ENCODE measurements at regions of chr3 and their contacts with region 1.

Region 1: GRCh38 chr3:195583831-195584542 is at the start of gene APOD:
- DNase-seq: no peak
- H3K4me3 Mint-ChIP-seq: no peak within 1 kb of the TSS
- H3K27ac Mint-ChIP-seq: no peak within 1 kb of the TSS
- H3K4me1 Mint-ChIP-seq: peaks cover 21% of the 10 kb centered on the region
- H3K27me3 Mint-ChIP-seq: peaks cover 3% of the 10 kb centered on the region
- total RNA-seq, gene APOD: 3.4 and 4.0 TPM in 2 replicates

Region 2: DNA sequence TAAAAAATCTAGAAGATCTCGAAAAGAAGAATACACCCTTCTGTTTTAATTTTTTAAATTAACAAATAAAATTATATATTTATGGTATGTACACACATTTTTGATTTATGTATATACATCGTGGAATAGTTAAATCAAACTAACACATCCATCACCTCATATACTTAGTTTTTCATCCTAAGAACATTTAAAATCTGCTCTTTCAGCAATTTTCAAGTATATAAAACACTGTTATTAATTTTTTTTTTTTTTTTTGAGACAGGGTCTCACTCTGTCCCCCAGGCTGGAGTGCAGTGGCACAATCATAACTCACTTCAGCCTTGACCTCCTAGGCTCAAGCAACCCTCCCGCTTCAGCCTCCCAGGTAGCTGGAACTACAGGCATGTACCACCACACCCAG is 108.4 kb before region 1 on chr3:
- intact Hi-C with region 1: no loop called
- DNase-seq: no peak
- H3K4me3 Mint-ChIP-seq: no peak overlapping the region
- H3K27ac Mint-ChIP-seq: no peak overlapping the region
- H3K4me1 Mint-ChIP-seq: no peaks in the 10 kb centered on the region
- H3K27me3 Mint-ChIP-seq: peaks cover 22% of the 10 kb centered on the region

Region 3: GRCh38 chr3:195549931-195550519 is 34.0 kb before region 1 on chr3:
- intact Hi-C with region 1: loop called (anchors 2 kb)
- DNase-seq: peak; percentile 75
- H3K4me3 Mint-ChIP-seq: peak overlapping the region; percentile 73
- H3K27ac Mint-ChIP-seq: peak overlapping the region; percentile 92
- H3K4me1 Mint-ChIP-seq: peaks cover 76% of the 10 kb centered on the region
- H3K27me3 Mint-ChIP-seq: no peaks in the 10 kb centered on the region

Measured in activated T-helper 1 cell treated with anti-CD3 and anti-CD28 coated beads, Interleukin-12 subunit alpha, Interleukin-12 subunit beta, Interleukin-2, Interleukin-4 antibody, amounts not matched to agents 30 ng/mL and 10 ng/mL and 1 ng/mL, durations not matched to agents 14 hours and 24 hours and 36 hours (primary cell).